ENCODE measurements at regions of chr1 and their contacts with region 1.

Region 1: DNA sequence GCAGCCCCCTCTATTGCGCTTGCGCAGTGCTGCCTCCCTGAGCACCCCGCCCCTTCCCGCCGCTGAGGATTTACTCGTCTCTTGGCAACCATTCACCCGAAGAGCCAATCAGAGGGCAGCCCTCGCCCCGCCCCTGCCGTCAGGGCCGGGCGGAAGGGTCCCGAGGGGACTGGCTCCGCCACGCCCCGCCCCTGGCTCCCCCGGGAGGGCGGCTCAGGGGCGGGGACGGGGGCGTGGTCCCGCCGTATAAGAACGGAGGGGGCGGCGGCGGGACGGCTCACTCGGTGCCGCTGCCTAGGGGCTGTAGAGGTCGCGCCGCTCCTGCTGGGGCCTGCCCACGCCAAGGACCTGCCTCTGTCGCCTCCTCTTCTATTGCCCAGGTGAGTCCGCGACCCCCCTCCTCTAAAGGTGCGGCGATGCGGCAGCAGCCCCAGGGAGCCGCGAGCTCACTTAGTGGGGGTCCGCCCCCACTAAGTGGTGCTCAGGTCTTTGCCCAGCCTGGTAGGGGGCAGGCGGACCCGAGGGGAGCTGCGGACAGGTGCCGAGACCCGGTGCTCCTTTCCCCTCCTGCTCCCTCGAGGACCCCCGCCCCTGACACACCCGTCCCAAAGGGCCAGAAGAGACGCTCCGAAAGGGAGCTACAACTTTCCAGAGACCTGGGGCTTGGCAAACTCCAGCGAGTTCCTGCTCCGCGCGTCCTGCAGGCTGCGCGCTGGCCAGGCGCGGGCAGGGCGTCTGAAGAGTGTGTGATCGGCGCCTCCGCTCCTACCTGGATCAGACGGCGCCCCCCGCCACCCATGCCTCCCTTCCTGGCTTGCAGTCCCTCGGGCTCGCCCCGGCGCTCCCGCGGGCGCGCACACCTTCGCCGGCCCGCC is at the start of gene TENT5C:
- DNase-seq: peak; percentile 98 to 99
- H3K4me3 ChIP-seq: peak within 1 kb of the TSS; percentile 68 to 84
- H3K27ac ChIP-seq: peak within 1 kb of the TSS; percentile 95
- H3K4me1 ChIP-seq: peaks cover 0 to 38% (median 20%) of the 10 kb centered on the region in 4 donors
- H3K27me3 ChIP-seq: no peaks in the 10 kb centered on the region
- CTCF ChIP-seq: peak in 1 of 2 experiments; percentile 8

Region 2: DNA sequence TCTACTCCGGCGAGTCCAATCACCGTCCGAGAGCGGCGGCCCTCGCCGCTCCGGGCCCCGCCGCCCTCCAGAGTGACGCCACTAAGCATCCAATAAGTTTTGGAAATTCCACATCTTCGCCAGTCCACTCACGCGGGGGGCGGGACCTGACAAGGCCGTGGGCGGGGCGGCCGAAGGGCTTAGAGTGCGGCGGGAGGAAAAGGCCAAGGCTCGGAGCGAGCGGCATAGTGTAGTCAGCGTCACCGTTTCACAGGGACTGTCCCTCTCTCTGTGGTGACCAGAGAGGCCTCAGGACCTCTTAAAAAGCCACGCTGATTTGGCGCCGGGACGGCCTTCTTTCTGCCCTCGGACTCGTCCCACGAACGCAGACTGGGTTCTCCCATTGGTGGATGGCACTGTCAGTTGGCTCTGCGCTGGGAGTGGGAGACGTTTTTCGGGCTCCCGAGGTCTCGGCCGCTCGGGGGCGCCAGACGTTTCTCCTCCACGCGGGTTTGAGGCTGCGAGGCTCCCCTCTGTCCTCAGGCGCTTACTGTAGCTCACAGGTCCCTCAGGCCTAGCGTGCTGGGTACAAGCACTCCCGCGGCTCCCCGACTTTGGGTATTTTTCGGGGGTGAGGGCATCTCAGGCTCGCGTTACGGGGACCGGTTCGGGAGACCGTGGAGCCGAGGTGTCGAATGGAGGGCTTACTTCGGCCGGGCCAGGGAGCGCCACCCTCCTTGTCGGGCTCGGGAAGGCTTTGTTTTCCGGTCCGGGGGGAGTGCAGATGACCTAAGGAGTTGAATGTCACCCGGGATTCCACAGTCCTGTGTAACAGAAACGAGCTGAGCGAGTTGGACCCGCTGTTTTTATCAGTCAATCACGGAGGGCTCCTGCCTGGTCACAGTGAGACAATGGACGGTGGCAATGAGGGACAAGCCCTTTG is 484.0 kb before region 1 on chr1:
- intact Hi-C with region 1: loop called (anchors 5 kb)
- DNase-seq: peak; percentile 98
- H3K4me3 ChIP-seq: peak overlapping the region; percentile 75 to 76
- H3K27ac ChIP-seq: peak overlapping the region; percentile 73 to 86
- H3K4me1 ChIP-seq: peaks cover 0 to 15% (median 8%) of the 10 kb centered on the region in 4 donors
- H3K27me3 ChIP-seq: no peaks in the 10 kb centered on the region
- CTCF ChIP-seq: peak; percentile 50 to 68

Region 3: DNA sequence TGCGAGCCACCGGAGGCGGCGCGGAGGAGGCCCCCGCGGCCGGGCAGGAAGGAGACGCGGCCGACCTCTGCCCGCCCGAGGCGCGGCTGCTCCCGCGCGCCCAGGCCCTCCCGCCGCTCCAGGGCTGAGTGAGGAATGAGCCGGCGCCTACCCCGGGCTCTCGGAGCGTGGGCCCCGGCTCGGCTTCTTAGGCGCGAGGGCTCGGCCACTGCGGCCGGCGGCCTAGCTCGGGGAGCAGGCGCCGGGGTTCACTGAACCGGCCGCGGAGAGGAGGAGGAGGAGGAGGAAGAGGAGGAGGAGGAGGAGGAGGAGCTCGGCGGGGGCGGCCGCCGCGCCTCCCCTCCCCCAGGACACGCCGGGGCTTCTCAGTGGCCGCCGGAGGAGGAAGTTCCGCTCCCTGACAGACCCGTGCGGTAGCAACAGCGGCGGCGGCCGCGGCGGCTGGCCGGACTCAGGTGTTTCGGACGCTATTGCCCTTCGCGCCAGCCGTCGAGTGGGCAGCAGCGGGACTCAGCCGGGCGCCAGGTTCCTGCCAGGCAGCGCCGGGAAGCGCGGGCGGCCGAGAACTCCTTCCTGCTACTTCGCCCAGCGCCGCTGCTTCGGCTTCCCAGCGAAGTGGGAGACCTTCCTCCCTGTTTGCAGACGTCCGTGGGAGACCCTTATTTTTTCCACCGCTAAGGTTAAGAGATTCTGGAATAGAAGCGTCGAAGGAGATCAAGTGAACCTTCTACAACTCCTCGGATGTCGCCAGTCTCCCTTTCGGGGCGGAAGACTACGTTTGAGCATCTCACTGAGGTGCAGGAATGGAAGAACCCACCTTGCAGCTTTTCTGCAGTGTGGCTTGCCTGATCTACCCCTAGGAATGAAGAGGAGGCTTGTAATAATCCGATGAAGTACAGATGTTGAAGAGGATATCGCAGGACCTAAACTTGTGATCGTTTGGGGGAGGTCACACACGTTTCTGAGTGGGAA is 238.7 kb before region 1 on chr1 and contains the start of gene MAN1A2:
- intact Hi-C with region 1: loop called (anchors 5 kb)
- DNase-seq: peak; percentile 87 to 94
- H3K4me3 ChIP-seq: peak within 1 kb of the TSS; percentile 71 to 93
- H3K27ac ChIP-seq: peak within 1 kb of the TSS; percentile 86 to 98
- H3K4me1 ChIP-seq: peaks cover 0 to 59% (median 22%) of the 10 kb centered on the region in 4 donors
- H3K27me3 ChIP-seq: no peaks in the 10 kb centered on the region
- CTCF ChIP-seq: peak in 1 of 2 experiments; percentile 17

Region 4: GRCh38 chr1:117644696-117645311 is 38.8 kb after region 1 on chr1:
- intact Hi-C with region 1: no loop called
- DNase-seq: no peak
- H3K4me3 ChIP-seq: no peak overlapping the region
- H3K27ac ChIP-seq: no peak overlapping the region
- H3K4me1 ChIP-seq: no peaks in the 10 kb centered on the region
- H3K27me3 ChIP-seq: no peaks in the 10 kb centered on the region
- CTCF ChIP-seq: no peak

Region 5: DNA sequence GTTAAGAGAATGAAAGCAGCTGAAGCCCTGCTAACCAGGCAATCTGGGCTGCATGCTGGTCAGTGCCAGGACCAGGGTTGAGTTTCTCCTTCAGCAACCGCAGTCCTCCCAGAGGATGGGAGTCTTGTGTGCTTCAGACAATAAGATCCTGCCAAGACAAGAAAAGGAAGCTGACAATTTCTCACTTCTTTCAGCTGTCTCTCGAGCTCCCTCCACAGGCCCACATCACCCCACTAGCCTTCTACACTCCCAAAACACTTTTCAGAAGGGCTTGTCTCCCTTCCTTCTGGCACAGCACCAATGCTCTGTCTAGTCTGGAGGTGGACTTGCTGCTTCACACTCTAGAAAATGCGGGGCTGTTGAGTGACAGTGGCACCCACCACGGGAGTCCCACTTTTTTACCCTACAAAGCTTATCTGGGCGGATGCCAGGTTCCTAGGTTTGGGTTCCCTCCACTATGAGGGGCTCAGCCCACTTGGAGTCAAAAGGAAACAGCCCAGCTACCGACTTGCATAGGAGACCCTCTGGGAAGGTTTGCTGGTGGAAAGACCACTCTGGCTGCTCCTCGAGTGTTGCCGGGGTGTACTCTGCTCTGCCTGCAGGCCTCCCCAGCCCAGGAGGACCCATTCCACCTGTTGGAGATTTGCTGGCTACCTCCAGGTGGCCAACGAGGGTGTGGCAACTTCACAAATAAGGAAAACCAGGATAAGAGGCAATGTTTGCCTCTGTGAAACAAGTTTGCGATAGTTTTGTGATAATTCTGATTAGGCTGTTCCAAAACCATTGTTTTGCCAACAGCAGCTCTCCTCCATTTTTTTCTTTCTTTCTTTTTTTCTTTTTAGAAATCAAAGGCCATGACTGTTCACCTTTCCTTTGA is 68.7 kb after region 1 on chr1:
- intact Hi-C with region 1: loop called (anchors 5 kb)
- DNase-seq: no peak
- H3K4me3 ChIP-seq: no peak overlapping the region
- H3K27ac ChIP-seq: peak overlapping the region; percentile 68 to 71
- H3K4me1 ChIP-seq: peaks cover 0 to 83% (median 38%) of the 10 kb centered on the region in 4 donors
- H3K27me3 ChIP-seq: no peaks in the 10 kb centered on the region
- CTCF ChIP-seq: peak in 1 of 2 experiments; percentile 9

Region 6: DNA sequence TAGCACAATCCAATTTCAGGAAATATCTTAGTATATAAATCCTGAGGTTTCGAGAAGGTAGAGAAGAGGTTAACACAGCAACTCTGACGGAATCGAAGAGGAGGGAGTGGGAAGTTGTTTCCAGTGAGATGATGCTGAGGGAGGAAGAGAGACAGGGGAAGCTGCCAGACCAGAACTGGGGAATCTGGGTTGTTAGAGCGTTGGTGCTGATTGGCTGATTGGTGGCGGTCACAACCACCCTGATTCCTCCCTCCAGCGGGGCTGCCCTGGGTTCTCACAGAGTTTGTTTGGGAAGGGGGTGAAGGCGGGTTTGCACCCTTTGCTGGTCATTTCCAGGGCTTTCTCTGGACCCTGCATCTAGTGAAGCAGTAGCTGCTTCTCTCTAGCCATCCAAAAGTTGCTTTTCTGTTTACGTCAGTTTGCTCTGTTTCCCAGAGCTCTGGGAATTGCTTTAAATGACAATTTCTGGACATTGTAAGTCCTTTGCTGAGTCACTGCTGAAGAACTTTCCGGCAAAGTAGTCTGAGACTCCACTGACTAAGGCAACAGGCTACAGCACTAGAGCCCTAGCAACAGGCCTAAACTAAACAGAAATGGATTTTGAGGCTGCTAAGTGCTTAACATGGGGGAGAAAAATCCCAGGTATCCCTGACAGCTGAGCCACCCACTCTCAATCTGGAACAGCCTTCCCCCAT is 89.9 kb after region 1 on chr1:
- intact Hi-C with region 1: loop called (anchors 5 kb)
- DNase-seq: peak in 1 of 2 donors; percentile 80
- H3K4me3 ChIP-seq: peak overlapping the region; percentile 37 to 53
- H3K27ac ChIP-seq: peak overlapping the region; percentile 88 to 89
- H3K4me1 ChIP-seq: peaks cover 0 to 52% (median 31%) of the 10 kb centered on the region in 4 donors
- H3K27me3 ChIP-seq: no peaks in the 10 kb centered on the region
- CTCF ChIP-seq: no peak

Region 7: GRCh38 chr1:117719004-117719403 is 113.0 kb after region 1 on chr1:
- intact Hi-C with region 1: no loop called
- DNase-seq: no peak
- H3K4me3 ChIP-seq: no peak overlapping the region
- H3K27ac ChIP-seq: no peak overlapping the region
- H3K4me1 ChIP-seq: no peaks in the 10 kb centered on the region
- H3K27me3 ChIP-seq: no peaks in the 10 kb centered on the region
- CTCF ChIP-seq: no peak

Measured in tibial artery (tissue), 4 donors.